PC-9 (cell line): ENCODE measurements at regions of chr1 and their contacts with region 1.

Region 1: GRCh38 chr1:51313961-51314777 is 16.2 kb downstream of the TTC39A start:
- DNase-seq: peak; percentile 42 to 93
- H3K4me3 ChIP-seq: peak overlapping the region; percentile 22; the same call in 1 of the 2 replicates
- H3K27ac ChIP-seq: peak overlapping the region; percentile 99
- H3K4me1 ChIP-seq: peaks cover 32% of the 10 kb centered on the region
- H3K27me3 ChIP-seq: no peaks in the 10 kb centered on the region
- CTCF ChIP-seq: no peak

Region 2: DNA sequence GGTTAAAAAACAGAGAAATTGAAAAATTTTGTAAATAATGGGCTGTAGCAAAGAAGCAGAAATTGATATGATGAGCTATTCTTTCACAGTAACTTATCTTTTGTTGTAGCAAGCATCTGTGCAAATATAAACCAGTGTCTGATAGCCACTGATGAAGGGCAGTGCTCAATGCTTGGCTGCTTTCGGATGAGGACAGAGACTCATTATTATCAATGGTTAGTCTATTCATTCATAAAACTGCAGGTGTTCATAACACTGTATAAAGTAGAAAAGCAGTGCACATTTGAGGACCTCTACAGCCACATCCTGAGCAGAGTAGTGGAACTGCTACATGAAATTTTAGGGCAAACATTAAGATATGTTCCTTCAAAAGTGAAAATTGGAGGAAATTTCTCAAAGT is 461.3 kb before region 1 on chr1:
- CTCF ChIA-PET with region 1: no interaction called
- POLR2A ChIA-PET with region 1: no interaction called
- intact Hi-C with region 1: no loop called
- DNase-seq: no peak
- H3K4me3 ChIP-seq: no peak overlapping the region
- H3K27ac ChIP-seq: no peak overlapping the region
- H3K4me1 ChIP-seq: no peaks in the 10 kb centered on the region
- H3K27me3 ChIP-seq: no peaks in the 10 kb centered on the region
- CTCF ChIP-seq: no peak

Region 3: GRCh38 chr1:51327386-51327785 is 13.2 kb after region 1 on chr1:
- CTCF ChIA-PET with region 1: no interaction called
- POLR2A ChIA-PET with region 1: interaction called, 15 read pairs
- intact Hi-C with region 1: no loop called
- DNase-seq: no peak
- H3K4me3 ChIP-seq: no peak overlapping the region
- H3K27ac ChIP-seq: no peak overlapping the region
- H3K4me1 ChIP-seq: peaks cover 19% of the 10 kb centered on the region
- H3K27me3 ChIP-seq: no peaks in the 10 kb centered on the region
- CTCF ChIP-seq: no peak